ENCODE measurements at regions of chr14 and their contacts with region 1.

Region 1: DNA sequence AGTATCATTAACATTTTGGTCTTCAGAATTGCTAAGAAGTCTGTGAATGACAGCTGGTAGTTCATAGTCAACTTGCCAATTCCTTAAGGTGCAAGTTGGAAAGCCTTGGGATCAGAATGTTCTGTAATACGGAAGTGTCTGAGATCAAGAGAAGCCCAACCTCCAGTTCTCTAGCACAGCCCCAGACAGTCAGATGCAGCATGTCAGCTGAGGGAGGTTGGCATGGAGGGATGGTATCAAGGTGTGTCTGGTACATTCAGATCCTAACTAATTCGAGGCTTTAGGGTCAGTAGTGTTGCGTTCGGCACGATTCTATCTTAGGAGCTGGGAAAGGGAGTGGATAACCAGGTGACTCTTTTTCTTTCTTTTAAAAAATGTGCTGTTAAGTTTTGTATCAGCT is 38.3 kb downstream of the FNTB start:
- DNase-seq: peak; percentile 50
- H3K4me3 ChIP-seq: no peak overlapping the region
- H3K27ac ChIP-seq: peak overlapping the region; percentile 70 to 77 (median 74)
- H3K4me1 ChIP-seq: peaks cover 0 to 21% (median 8%) of the 10 kb centered on the region in 4 donors
- H3K27me3 ChIP-seq: no peaks in the 10 kb centered on the region
- CTCF ChIP-seq: no peak
- EP300 ChIP-seq: no peak
- POLR2A ChIP-seq: no peak

Region 2: GRCh38 chr14:65095619-65096205 is 70.8 kb after region 1 on chr14:
- intact Hi-C with region 1: loop called (anchors 5 kb)
- DNase-seq: peak; percentile 91
- H3K4me3 ChIP-seq: no peak overlapping the region
- H3K27ac ChIP-seq: peak overlapping the region; percentile 59 to 96 (median 75)
- H3K4me1 ChIP-seq: peaks cover 0 to 81% (median 75%) of the 10 kb centered on the region in 4 donors
- H3K27me3 ChIP-seq: no peaks in the 10 kb centered on the region
- CTCF ChIP-seq: no peak
- EP300 ChIP-seq: no peak
- POLR2A ChIP-seq: no peak

Region 3: GRCh38 chr14:65303190-65303898 is 278.4 kb after region 1 on chr14:
- intact Hi-C with region 1: no loop called
- DNase-seq: no peak
- H3K4me3 ChIP-seq: no peak overlapping the region
- H3K27ac ChIP-seq: no peak overlapping the region
- H3K4me1 ChIP-seq: no peaks in the 10 kb centered on the region
- H3K27me3 ChIP-seq: no peaks in the 10 kb centered on the region
- CTCF ChIP-seq: no peak
- EP300 ChIP-seq: no peak
- POLR2A ChIP-seq: no peak

Measured in sigmoid colon (tissue), 7 donors.